Activated CD8-positive, alpha-beta T cell treated with anti-CD3 and anti-CD28 coated beads for 36 hours (primary cell): ENCODE measurements at regions of chr13 and their contacts with region 1.

Region 1: DNA sequence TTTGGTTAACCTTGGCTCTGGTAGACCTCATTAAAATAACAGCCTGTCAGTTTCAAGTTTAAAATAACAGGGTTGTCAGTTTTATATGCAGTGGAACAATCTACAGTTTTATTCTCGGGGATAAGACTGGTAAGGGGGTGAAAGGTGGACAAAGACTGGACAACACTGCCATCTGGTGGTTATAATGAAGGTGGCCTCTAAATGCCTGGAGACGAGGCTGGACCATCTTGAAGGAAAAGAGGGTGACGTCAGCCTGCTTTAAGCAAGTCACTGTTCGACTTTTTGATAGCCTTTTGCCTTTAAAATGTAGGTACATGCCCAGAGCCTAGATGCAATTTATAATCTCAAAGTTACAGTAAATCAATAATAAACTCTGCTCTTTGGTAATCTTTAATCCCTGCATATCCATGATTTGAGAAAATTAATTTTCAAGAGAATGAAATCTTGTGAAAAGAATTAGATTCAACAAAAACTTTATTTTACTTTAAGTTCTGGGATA is 117.0 kb downstream of the DCT start:
- DNase-seq: peak; percentile 79
- ATAC-seq: peak; percentile 99
- H3K4me3 Mint-ChIP-seq: no peak overlapping the region
- H3K27ac Mint-ChIP-seq: no peak overlapping the region
- H3K4me1 Mint-ChIP-seq: peaks cover 7% of the 10 kb centered on the region
- H3K27me3 Mint-ChIP-seq: peaks cover 5% of the 10 kb centered on the region
- CTCF ChIP-seq: peak; percentile 88

Region 2: DNA sequence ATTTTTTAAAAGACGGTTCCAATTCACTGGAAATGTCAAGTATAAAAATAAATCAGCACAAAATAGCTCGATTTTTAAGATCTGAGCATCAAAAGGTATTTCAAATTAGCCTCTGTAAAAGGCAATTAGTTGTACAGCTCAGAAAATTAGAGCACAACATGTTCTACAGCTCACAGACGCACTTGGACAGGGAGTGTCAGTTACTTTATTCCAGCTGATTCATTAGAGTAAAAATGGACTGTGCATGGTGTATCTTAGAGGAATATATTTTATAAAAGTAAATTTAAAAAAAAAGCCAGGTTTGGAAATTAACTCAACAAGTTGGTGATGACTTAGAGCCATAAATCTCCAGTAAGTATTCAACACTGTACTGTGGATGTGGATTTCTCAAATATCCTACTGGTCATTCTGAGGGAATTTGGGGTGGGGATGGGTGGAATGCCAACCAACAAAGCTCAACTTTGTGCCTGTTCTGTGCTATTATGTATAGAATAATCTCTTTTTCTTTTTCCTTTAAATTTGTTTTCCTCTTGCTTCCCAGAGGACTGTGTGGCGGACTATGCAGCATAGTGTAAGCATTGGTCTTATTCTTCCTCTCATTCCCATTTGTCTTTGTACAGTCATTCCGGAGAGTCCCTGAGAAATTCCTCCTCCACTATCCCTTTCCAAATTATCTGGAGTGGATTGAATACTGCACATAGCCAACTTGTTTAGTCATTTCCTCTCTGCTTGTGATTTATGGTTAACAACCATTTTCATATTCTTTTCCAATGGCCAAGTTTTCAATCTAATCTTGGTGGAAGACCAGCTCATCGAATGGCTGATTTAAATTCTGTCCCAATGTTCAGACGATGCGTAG is 52.2 kb before region 1 on chr13:
- CTCF ChIA-PET with region 1: no interaction called
- POLR2A ChIA-PET with region 1: no interaction called
- intact Hi-C with region 1: no loop called
- DNase-seq: no peak
- ATAC-seq: no peak
- H3K4me3 Mint-ChIP-seq: no peak overlapping the region
- H3K27ac Mint-ChIP-seq: no peak overlapping the region
- H3K4me1 Mint-ChIP-seq: no peaks in the 10 kb centered on the region
- H3K27me3 Mint-ChIP-seq: no peaks in the 10 kb centered on the region
- CTCF ChIP-seq: no peak

Region 3: GRCh38 chr13:94345374-94346195 is 16.9 kb before region 1 on chr13:
- CTCF ChIA-PET with region 1: interaction called, 22 read pairs
- POLR2A ChIA-PET with region 1: interaction called, 7 read pairs
- intact Hi-C with region 1: no loop called
- DNase-seq: no peak
- ATAC-seq: peak; percentile 54
- H3K4me3 Mint-ChIP-seq: no peak overlapping the region
- H3K27ac Mint-ChIP-seq: no peak overlapping the region
- H3K4me1 Mint-ChIP-seq: peaks cover 16% of the 10 kb centered on the region
- H3K27me3 Mint-ChIP-seq: peaks cover 2% of the 10 kb centered on the region
- CTCF ChIP-seq: no peak

Region 4: DNA sequence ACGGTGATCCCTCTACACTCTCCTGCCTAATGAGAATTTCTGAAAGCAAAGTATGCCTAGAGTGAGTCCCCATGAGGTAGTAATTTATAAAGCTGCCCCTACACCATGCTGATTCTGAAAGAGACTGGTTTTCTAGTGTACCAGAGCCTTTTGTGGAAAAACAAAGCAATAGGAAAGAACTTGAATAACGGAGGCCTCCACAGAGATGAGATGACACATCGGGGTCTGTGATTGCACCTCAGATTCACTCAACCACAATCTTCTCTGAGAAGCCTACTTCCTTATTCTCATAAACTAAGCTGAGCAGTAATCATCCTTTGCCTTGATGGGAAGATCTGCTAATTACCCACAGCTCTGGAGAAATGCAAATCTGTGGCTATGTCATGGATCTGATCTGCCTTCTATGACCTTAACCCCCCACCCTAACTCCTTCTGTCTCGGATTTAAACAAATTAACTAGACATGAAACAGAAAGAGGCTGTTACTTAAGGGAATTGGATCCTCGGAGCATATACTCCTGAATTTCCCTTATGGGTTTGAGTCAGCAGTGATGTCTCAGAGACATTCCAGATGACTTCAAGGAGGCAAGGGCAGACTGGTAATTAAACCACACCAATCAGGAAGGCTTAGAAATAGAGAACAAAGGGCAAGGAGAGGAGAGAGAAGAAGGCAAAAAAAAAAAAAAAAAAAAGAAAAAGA is 11.0 kb before region 1 on chr13:
- CTCF ChIA-PET with region 1: interaction called, 22 read pairs
- POLR2A ChIA-PET with region 1: interaction called, 7 read pairs
- intact Hi-C with region 1: no loop called
- DNase-seq: peak; percentile 48
- ATAC-seq: peak; percentile 75
- H3K4me3 Mint-ChIP-seq: no peak overlapping the region
- H3K27ac Mint-ChIP-seq: peak overlapping the region; percentile 36
- H3K4me1 Mint-ChIP-seq: peaks cover 28% of the 10 kb centered on the region
- H3K27me3 Mint-ChIP-seq: peaks cover 4% of the 10 kb centered on the region
- CTCF ChIP-seq: no peak

Region 5: GRCh38 chr13:95256086-95256485 is 893.6 kb after region 1 on chr13:
- CTCF ChIA-PET with region 1: no interaction called
- POLR2A ChIA-PET with region 1: no interaction called
- intact Hi-C with region 1: no loop called
- DNase-seq: no peak
- ATAC-seq: no peak
- H3K4me3 Mint-ChIP-seq: no peak overlapping the region
- H3K27ac Mint-ChIP-seq: no peak overlapping the region
- H3K4me1 Mint-ChIP-seq: peaks cover 19% of the 10 kb centered on the region
- H3K27me3 Mint-ChIP-seq: no peaks in the 10 kb centered on the region
- CTCF ChIP-seq: no peak